Heart left ventricle (tissue), 16 donors: ENCODE measurements at regions of chr17 and their contacts with region 1.

Region 1: GRCh38 chr17:73532421-73532901 is 111.8 kb downstream of the SDK2 start:
- DNase-seq: peak in 1 of 5 donors; percentile 50
- ATAC-seq: peak in 2 of 4 donors; percentile 11 to 32
- H3K4me3 ChIP-seq: no peak overlapping the region
- H3K27ac ChIP-seq: no peak overlapping the region
- H3K4me1 ChIP-seq: peaks cover 0 to 8% (median 0%) of the 10 kb centered on the region in 12 donors
- H3K27me3 ChIP-seq: no peaks in the 10 kb centered on the region
- CTCF ChIP-seq: no peak
- POLR2A ChIP-seq: no peak

Region 2: GRCh38 chr17:73478768-73479424 is 53.6 kb before region 1 on chr17:
- intact Hi-C with region 1: loop called in 6 of 10 experiments (anchors 1 to 10 kb)
- DNase-seq: no peak
- ATAC-seq: no peak
- H3K4me3 ChIP-seq: no peak overlapping the region
- H3K27ac ChIP-seq: no peak overlapping the region
- H3K4me1 ChIP-seq: peaks cover 2 to 37% (median 11%) of the 10 kb centered on the region in 12 donors
- H3K27me3 ChIP-seq: peaks cover 0 to 7% (median 0%) of the 10 kb centered on the region in 9 donors
- CTCF ChIP-seq: no peak
- POLR2A ChIP-seq: no peak

Region 3: DNA sequence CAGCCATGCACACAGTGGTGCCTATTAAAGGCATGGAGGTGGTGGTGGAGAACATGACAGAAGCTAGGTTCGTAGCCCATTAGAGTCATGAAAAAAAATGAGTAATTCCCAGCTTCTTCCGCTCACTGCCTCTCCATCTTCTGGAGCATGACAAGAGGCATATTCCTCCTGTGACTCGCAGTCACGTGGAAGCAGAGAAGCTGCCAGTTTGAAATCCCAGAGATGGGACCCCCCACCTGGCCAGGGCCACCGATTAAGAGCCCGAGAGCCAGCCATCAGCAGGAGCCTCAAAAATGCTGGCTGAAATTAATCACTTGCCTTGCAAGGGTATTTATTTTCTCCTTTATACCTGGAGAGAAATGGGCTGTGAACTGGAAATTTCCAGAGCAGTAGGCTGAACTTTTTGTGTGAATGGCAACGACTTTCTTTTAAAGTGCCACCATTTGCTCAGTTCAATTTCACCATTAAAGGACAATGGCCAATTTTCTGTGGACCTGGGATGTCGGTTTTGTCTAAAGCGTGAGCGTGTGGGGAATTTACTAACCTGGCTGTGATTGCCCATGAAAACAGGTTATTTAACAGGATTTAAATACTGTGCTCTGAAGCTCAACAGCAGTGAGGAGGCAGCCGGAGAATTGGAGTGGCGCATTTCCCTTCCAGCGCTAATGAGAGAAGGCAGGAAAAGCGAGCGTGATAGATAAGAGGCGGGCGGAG is 301.5 kb after region 1 on chr17:
- intact Hi-C with region 1: no loop called
- DNase-seq: no peak
- ATAC-seq: no peak
- H3K4me3 ChIP-seq: no peak overlapping the region
- H3K27ac ChIP-seq: no peak overlapping the region
- H3K4me1 ChIP-seq: no peaks in the 10 kb centered on the region
- H3K27me3 ChIP-seq: peaks cover 0 to 46% (median 10%) of the 10 kb centered on the region in 9 donors
- CTCF ChIP-seq: no peak
- POLR2A ChIP-seq: no peak